A549 (cell line): ENCODE measurements at regions of chr9 and their contacts with region 1.

Region 1: DNA sequence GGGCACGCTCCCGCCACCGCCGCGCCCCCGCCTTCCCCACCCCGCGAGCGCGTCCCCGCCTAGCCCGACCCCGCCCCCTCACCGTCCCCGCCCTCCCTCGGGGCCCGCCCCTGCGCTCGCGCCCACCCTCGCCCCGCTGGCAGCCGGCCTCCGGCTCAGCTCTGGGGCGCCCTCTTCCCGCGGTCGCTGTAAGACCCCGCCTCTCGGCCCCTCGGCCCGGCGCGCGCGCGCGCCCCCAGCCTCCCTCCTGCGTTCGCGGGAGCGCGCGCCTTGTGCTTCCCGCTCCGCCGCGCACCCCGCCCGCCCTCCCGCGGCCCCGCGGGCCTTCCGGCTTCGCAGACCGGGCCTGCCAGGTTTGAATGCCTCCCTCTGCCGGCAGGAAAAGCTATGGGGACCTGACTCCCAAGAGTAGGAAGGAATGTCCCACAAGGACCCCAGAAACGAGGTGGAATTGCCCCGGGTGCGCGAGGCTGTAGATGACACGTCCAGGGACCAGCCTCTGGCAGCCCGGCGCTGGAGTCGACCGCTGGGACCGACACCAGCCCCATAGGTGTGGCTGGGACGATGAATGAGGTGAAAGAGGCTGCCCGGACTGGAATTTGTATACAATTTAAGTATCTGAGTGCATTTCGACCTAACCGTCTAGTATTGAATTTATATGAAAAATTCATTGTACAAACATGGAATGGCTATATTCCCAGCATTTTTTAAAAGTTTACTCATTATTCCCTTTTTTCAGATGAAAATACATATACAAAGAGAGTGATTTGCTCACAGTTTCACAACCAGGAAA is 416 bp upstream of the PTBP3 start:
- DNase-seq: peak; percentile 90 to 95
- ATAC-seq: peak; percentile 68 to 78
- H3K4me3 ChIP-seq: peak overlapping the region; percentile 81
- H3K27ac ChIP-seq: peak overlapping the region; percentile 97
- H3K4me1 ChIP-seq: peaks cover 44% of the 10 kb centered on the region
- CTCF ChIP-seq: peak; percentile 68
- EP300 ChIP-seq: no peak
- POLR2A ChIP-seq: peak; percentile 56
- RAD21 ChIP-seq: peak; percentile 31 to 77

Region 2: GRCh38 chr9:112020680-112021596 is 312.9 kb before region 1 on chr9:
- CTCF ChIA-PET with region 1: no interaction called
- POLR2A ChIA-PET with region 1: no interaction called
- DNase-seq: peak; percentile 77 to 86
- ATAC-seq: peak; percentile 89 to 96
- H3K4me3 ChIP-seq: no peak overlapping the region
- H3K27ac ChIP-seq: peak overlapping the region; percentile 71 to 89
- H3K4me1 ChIP-seq: peaks cover 24% of the 10 kb centered on the region
- CTCF ChIP-seq: no peak
- EP300 ChIP-seq: peak; percentile 77 to 82; a peak in 4 of 5 replicates
- POLR2A ChIP-seq: no peak
- RAD21 ChIP-seq: peak; percentile 29 to 59; a peak in 4 of 5 replicates

Region 3: DNA sequence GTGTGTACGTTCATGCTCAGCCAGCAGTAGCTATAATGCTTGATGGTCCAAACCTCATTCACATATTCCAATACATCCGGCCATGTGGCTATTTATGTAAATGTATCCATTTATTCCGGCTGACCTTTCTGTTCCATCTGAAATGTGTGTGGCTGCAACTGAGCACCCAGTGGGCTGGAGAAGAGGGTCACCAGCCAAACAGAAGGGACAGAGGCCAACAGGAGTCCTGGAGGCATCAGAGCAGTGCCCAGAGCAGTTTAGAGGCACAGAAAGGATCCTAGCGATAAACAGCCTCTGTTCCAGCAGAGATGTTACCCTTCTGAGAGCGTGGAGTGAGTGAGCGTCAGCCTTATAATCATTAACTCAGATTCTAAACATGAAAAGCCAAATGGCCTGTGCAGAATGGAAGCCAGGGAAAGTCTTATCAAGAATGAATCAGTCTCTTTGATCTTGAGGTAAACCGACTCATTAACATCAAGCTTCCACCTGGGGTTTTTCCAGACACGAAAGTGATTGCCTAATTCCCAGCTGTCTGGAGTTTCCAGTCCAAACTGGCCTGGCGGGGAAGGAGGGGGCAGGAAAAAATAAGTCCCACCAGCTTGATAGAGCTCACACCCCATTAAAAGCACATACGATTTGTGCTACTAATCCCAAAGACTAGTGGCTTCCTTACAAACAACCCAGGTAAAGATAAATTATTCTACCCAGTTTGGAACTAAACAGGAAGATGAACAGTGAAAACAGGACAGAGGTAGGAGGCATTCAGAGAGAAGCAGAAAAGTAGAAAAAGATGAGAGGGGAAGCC is 214.4 kb before region 1 on chr9:
- CTCF ChIA-PET with region 1: interaction called, 3 read pairs
- POLR2A ChIA-PET with region 1: interaction called, 22 read pairs
- DNase-seq: peak; percentile 72 to 94
- ATAC-seq: peak; percentile 91 to 93
- H3K4me3 ChIP-seq: no peak overlapping the region
- H3K27ac ChIP-seq: peak overlapping the region; percentile 94 to 95
- H3K4me1 ChIP-seq: peaks cover 70% of the 10 kb centered on the region
- CTCF ChIP-seq: no peak
- EP300 ChIP-seq: peak; percentile 90 to 93
- POLR2A ChIP-seq: no peak
- RAD21 ChIP-seq: peak in 1 of 2 experiments; percentile 49; a peak in 3 of 5 replicates

Region 4: GRCh38 chr9:112174218-112174964 is 159.4 kb before region 1 on chr9:
- CTCF ChIA-PET with region 1: interaction called, 7 read pairs
- POLR2A ChIA-PET with region 1: interaction called, 10 read pairs
- DNase-seq: peak; percentile 68 to 69
- ATAC-seq: peak; percentile 87 to 89
- H3K4me3 ChIP-seq: peak overlapping the region; percentile 87
- H3K27ac ChIP-seq: peak overlapping the region; percentile 99
- H3K4me1 ChIP-seq: peaks cover 35% of the 10 kb centered on the region
- CTCF ChIP-seq: no peak
- EP300 ChIP-seq: 0 out of 5 replicates have a peak, but pooled peaks of 1 of the 2 experiments have one; percentile 23
- POLR2A ChIP-seq: no peak
- RAD21 ChIP-seq: peak in 1 of 2 experiments; percentile 11; a peak in 1 of 5 replicates

Region 5: GRCh38 chr9:112288029-112288428 is 45.8 kb before region 1 on chr9:
- CTCF ChIA-PET with region 1: interaction called, 10 read pairs
- POLR2A ChIA-PET with region 1: no interaction called
- DNase-seq: no peak
- ATAC-seq: no peak
- H3K4me3 ChIP-seq: no peak overlapping the region
- H3K27ac ChIP-seq: no peak overlapping the region
- H3K4me1 ChIP-seq: peaks cover 16% of the 10 kb centered on the region
- CTCF ChIP-seq: no peak
- EP300 ChIP-seq: no peak
- POLR2A ChIP-seq: no peak
- RAD21 ChIP-seq: no peak

Region 6: DNA sequence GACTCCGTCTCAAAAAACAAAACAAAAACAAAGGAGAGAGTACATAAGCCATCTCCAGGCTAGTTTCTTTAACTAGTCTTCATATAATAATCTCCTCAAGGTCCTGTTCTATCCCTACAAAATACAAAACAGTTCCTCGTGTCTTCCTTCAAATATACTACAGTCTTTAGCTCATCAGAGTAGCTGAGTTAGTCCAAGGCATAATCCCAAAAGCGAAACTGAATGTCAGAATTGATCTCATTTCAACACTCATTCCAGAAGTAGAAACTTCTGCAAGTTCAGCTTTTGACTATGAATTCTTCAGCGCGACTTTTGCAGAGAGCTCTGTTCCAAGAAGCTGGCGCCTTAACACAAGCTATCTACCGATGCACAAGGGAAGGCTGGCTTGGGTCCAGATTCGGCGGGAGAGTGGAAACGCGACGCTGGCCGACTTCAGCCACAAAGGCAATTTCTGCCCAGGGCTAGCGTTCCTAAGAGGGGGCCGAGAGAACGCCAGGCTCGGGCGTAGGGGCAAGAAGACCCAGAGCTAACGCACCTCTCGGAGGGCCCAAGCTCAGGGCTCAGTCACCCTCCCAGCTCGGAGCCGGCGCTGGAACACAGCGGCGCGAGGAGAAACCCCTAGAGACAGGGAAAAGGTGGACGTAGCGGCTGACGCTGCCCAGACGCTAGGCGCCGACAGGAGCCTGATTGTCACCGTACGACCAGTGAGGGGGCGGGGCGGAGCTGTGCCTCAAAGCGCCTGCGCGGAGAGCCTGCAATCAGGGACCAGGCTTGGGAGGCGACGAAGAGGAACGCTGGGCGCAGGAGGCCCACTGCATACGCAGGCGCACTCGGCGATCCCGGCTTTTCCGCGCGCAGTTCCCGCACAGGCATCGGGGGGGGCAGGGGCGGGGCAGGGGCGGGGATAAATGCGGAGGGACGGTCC is 45.6 kb after region 1 on chr9:
- CTCF ChIA-PET with region 1: no interaction called
- POLR2A ChIA-PET with region 1: interaction called, 22 read pairs
- DNase-seq: peak; percentile 92 to 99
- ATAC-seq: peak; percentile 91 to 95
- H3K4me3 ChIP-seq: peak overlapping the region; percentile 70
- H3K27ac ChIP-seq: peak overlapping the region; percentile 90 to 93
- H3K4me1 ChIP-seq: peaks cover 28% of the 10 kb centered on the region; the same call in 2 of the 3 replicates
- CTCF ChIP-seq: no peak
- EP300 ChIP-seq: no peak
- POLR2A ChIP-seq: peak; percentile 93
- RAD21 ChIP-seq: no peak

Region 7: GRCh38 chr9:112447283-112447761 is 113.5 kb after region 1 on chr9:
- CTCF ChIA-PET with region 1: no interaction called
- POLR2A ChIA-PET with region 1: no interaction called
- DNase-seq: no peak
- ATAC-seq: no peak
- H3K4me3 ChIP-seq: no peak overlapping the region
- H3K27ac ChIP-seq: no peak overlapping the region
- H3K4me1 ChIP-seq: no peaks in the 10 kb centered on the region
- CTCF ChIP-seq: no peak
- EP300 ChIP-seq: no peak
- POLR2A ChIP-seq: no peak
- RAD21 ChIP-seq: no peak